Activated CD4-positive, alpha-beta T cell treated with anti-CD3 and anti-CD28 coated beads, Interleukin-2, amount 10 ng/mL, durations not matched to agents 24 days and 14 days (primary cell): ENCODE measurements at regions of chr4 and their contacts with region 1.

Region 1: DNA sequence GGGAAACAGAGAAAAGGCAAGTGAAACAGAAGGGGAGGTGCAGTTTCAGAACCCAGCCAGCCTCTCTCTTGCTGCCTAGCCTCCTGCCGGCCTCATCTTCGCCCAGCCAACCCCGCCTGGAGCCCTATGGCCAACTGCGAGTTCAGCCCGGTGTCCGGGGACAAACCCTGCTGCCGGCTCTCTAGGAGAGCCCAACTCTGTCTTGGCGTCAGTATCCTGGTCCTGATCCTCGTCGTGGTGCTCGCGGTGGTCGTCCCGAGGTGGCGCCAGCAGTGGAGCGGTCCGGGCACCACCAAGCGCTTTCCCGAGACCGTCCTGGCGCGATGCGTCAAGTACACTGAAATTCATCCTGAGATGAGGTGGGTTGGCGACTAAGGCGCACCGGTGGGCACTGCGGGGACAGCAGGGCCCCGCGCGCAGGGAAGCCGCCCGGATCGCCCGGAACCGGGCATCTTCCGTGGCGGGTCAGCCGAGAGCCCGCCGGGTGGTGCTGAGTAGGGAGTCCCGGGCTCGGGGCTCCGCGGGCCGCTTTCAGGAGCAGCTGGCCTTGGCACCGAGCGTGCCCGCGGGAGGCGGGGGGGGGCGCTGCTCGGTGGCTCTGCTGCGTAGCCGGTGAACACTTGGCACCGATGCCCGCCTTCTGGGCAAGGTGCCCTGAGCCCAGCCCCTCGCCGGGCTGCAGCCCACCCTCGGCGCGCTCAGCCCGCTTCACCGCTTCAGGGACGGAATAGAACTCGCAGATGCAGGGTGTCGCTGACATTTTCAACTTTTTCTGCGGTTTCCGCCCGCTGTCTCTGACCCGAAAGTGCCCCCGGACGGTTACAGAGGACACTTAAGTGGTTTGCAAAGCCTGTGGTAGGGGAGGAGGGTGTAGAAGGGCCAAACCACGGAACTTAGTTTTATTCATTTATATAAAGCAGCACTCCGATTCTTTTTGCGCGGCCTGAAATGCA is at the start of gene CD38:
- DNase-seq: peak; percentile 90
- H3K4me3 Mint-ChIP-seq: peak within 1 kb of the TSS; percentile 94
- H3K27ac Mint-ChIP-seq: peak within 1 kb of the TSS; percentile 97
- H3K4me1 Mint-ChIP-seq: peaks cover 68% of the 10 kb centered on the region
- H3K27me3 Mint-ChIP-seq: no peaks in the 10 kb centered on the region
- total RNA-seq, gene CD38: 89.6 and 103 TPM in 2 replicates

Region 2: DNA sequence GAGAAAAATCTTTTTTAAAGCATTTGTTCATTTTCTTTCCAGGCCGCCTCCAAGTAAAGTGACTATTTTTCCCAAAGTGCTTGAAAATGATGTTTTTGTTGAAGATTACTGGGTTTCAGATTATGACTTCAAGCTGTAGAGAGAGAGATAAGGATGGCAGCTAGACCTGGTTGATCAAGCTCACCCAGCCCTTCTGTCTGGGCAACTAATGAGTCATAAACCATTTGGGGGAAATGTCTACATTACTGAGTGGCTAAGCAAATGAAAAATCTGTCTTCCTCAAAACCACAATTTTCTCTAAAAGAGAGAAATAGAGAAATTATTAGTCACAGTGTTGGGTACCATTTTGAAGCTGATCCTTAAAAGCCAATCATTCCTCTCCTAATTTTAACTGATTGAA is 1131.7 kb before region 1 on chr4:
- intact Hi-C with region 1: no loop called
- DNase-seq: no peak
- H3K4me3 Mint-ChIP-seq: no peak overlapping the region
- H3K27ac Mint-ChIP-seq: no peak overlapping the region
- H3K4me1 Mint-ChIP-seq: no peaks in the 10 kb centered on the region
- H3K27me3 Mint-ChIP-seq: no peaks in the 10 kb centered on the region

Region 3: DNA sequence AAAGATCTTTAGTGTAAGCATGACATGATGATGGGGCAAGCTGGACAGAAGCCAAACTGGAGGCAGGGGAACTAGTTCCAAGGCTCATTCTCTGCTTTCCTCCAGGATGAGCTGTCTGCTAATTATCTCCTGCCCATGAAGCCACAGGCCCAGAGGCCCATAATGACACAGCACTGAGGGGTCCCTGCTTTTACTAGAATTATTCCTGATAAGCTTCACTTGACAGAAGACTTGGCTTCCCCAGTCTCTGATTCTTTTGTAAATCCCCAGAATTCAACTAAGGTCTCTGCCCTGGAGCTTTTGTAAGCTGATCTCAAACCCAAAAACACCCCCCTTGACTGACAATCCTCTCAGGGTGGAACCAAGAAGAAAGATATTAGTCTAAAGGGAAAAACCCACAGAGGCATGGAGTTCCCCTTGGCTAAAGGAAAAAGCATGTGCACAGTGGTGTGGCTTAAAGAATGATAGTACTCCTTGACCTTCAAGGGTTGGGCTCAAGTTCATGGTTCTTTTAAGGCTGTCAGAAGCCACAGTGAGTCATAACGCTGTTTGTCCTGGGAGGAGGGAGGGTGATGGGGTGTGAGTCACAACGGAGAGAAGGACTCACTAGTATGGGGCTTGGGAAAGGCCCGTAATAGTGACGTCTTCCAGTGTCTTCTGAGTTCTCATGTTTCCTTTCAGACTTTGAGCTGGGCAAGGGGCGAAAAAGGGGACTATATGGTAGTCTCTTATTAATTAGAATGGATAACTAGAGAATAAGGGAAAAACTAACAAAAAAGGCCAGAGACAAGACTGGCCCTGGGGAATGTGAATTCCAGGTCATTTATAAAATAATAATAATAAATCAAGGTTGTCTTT is 922.3 kb before region 1 on chr4:
- intact Hi-C with region 1: loop called (anchors 10 kb)
- DNase-seq: peak; percentile 83
- H3K4me3 Mint-ChIP-seq: peak overlapping the region; percentile 48
- H3K27ac Mint-ChIP-seq: peak overlapping the region; percentile 90
- H3K4me1 Mint-ChIP-seq: peaks cover 19% of the 10 kb centered on the region
- H3K27me3 Mint-ChIP-seq: no peaks in the 10 kb centered on the region

Region 4: GRCh38 chr4:15681207-15682015 is 97.2 kb before region 1 on chr4 and contains the start of gene FAM200B:
- intact Hi-C with region 1: loop called (anchors 1 kb)
- DNase-seq: peak; percentile 100
- H3K4me3 Mint-ChIP-seq: peak within 1 kb of the TSS; percentile 100
- H3K27ac Mint-ChIP-seq: peak within 1 kb of the TSS; percentile 99
- H3K4me1 Mint-ChIP-seq: peaks cover 40% of the 10 kb centered on the region
- H3K27me3 Mint-ChIP-seq: no peaks in the 10 kb centered on the region
- total RNA-seq, gene FAM200B: 6.0 and 9.9 TPM in 2 replicates

Region 5: GRCh38 chr4:15738877-15739276 is 39.7 kb before region 1 on chr4:
- intact Hi-C with region 1: loop called (anchors 1 kb)
- DNase-seq: no peak
- H3K4me3 Mint-ChIP-seq: peak overlapping the region; percentile 27
- H3K27ac Mint-ChIP-seq: peak overlapping the region; percentile 77
- H3K4me1 Mint-ChIP-seq: peaks cover 40% of the 10 kb centered on the region
- H3K27me3 Mint-ChIP-seq: no peaks in the 10 kb centered on the region

Region 6: GRCh38 chr4:15765910-15766697 is 12.5 kb before region 1 on chr4:
- intact Hi-C with region 1: loop called (anchors 1 kb)
- DNase-seq: peak; percentile 88
- H3K4me3 Mint-ChIP-seq: peak overlapping the region; percentile 39
- H3K27ac Mint-ChIP-seq: peak overlapping the region; percentile 78
- H3K4me1 Mint-ChIP-seq: peaks cover 57% of the 10 kb centered on the region
- H3K27me3 Mint-ChIP-seq: no peaks in the 10 kb centered on the region

Region 7: DNA sequence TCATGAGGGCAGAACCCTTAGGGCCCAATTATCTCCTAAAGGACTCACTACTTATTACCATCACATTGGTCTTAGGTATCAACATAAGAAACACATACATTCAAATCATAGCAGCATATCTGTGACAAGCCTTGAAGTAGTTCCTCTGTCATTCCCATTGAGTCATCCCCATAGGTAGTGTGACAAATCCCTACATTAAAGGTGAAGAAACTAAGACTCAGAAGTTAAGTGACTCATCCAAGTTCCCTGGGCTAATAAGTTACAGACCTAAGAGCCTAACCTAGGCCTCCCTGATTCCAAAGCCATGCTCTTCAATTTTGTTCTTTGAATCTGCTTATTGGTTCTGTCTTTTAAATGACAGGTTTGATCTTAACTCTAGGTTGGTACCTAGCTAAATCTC is 57.8 kb after region 1 on chr4:
- intact Hi-C with region 1: no loop called
- DNase-seq: no peak
- H3K4me3 Mint-ChIP-seq: no peak overlapping the region
- H3K27ac Mint-ChIP-seq: peak overlapping the region; percentile 53
- H3K4me1 Mint-ChIP-seq: peaks cover 28% of the 10 kb centered on the region
- H3K27me3 Mint-ChIP-seq: no peaks in the 10 kb centered on the region

Region 8: GRCh38 chr4:16067515-16067914 is 288.9 kb after region 1 on chr4:
- intact Hi-C with region 1: no loop called
- DNase-seq: no peak
- H3K4me3 Mint-ChIP-seq: no peak overlapping the region
- H3K27ac Mint-ChIP-seq: no peak overlapping the region
- H3K4me1 Mint-ChIP-seq: no peaks in the 10 kb centered on the region
- H3K27me3 Mint-ChIP-seq: peaks cover 6% of the 10 kb centered on the region

Region 9: DNA sequence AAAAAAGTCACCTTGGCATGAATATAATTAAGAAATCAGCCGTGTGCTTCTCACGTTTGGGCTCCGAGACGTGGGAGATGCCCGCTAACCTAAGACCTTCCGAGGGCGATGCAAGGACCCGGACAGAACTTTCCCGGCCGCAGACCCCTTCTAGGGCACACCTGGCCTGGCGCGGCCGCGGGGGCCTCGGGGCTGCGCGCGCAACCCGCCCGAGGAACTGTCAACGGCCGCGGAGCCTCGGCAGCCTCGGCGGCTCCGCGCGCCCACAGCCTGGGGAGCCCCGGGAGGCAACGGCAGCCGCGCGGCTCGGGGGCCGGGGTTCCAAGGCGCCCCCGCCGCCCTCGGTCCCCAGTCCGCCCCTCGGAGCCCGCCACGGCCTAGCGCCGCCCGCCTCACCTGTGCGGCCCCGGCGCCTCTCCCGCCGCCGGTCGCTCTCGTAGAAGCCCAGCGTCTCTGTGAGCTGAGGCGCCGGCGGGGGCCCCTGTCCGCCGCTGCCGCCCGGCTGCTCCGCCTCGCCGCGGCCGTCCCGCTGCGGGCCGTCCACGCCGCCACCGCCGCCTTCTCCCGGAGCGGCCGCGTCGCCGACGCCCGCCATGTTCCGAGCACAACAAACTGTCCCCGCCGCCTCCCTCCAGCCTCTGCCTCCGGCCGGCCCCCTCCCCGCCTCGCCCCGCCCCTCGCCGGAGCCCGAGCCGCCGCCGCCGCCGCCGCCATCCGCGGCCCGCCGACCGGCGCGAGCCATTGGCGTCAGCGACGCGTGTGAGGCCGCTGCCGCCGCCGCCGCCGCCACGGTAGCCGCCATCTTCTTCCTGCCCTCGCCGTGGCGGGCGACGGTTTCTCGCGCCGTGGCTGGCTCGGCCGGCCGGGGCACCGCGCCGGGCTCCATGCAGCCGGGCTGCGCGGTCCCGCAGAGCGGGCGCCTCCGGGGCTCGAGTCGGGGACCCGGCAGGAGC is 447.6 kb after region 1 on chr4 and contains the start of gene TAPT1:
- intact Hi-C with region 1: loop called (anchors 10 kb)
- DNase-seq: peak; percentile 94
- H3K4me3 Mint-ChIP-seq: peak within 1 kb of the TSS; percentile 90
- H3K27ac Mint-ChIP-seq: peak within 1 kb of the TSS; percentile 98
- H3K4me1 Mint-ChIP-seq: peaks cover 45% of the 10 kb centered on the region
- H3K27me3 Mint-ChIP-seq: no peaks in the 10 kb centered on the region
- total RNA-seq, gene TAPT1: 27.2 and 29.3 TPM in 2 replicates

Region 10: DNA sequence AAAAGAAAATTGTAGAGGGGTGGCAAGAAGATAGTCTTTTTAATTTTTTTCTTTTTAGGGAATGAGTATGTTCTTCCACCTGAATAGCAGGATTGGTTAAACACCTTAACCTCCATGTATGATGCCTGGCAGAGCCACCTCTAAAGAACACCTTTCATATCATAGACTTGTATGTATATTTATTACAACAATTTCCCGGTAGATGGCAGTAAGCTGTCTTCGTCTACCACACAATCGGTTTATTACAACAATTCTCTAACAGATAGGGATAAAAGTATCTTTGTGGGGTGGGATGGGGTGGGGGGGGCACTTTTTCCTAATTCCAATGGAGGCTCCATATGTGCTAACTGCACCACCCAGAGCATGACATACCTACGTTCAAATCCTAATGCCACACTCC is 864.3 kb after region 1 on chr4:
- intact Hi-C with region 1: no loop called
- DNase-seq: no peak
- H3K4me3 Mint-ChIP-seq: no peak overlapping the region
- H3K27ac Mint-ChIP-seq: no peak overlapping the region
- H3K4me1 Mint-ChIP-seq: no peaks in the 10 kb centered on the region
- H3K27me3 Mint-ChIP-seq: peaks cover 2% of the 10 kb centered on the region